Dendritic cell treated with granulocyte-macrophage colony-stimulating factor and Interleukin-4, amounts not matched to agents 40 ng/mL and 50 ng/mL, for 4 days (primary cell): ENCODE measurements at regions of chr19 and their contacts with region 1.

Region 1: GRCh38 chr19:52922841-52923777 is at the start of gene ZNF888:
- H3K4me3 Mint-ChIP-seq: peak within 1 kb of the TSS; percentile 81
- H3K27ac Mint-ChIP-seq: peak within 1 kb of the TSS; percentile 94
- H3K4me1 Mint-ChIP-seq: peaks cover 42% of the 10 kb centered on the region
- H3K27me3 Mint-ChIP-seq: no peaks in the 10 kb centered on the region

Region 2: GRCh38 chr19:52897144-52897935 is 25.8 kb before region 1 on chr19 and contains the start of gene ZNF320:
- intact Hi-C with region 1: loop called (anchors 1 kb)
- H3K4me3 Mint-ChIP-seq: peak within 1 kb of the TSS; percentile 97
- H3K27ac Mint-ChIP-seq: peak within 1 kb of the TSS; percentile 97
- H3K4me1 Mint-ChIP-seq: peaks cover 24% of the 10 kb centered on the region
- H3K27me3 Mint-ChIP-seq: no peaks in the 10 kb centered on the region

Region 3: DNA sequence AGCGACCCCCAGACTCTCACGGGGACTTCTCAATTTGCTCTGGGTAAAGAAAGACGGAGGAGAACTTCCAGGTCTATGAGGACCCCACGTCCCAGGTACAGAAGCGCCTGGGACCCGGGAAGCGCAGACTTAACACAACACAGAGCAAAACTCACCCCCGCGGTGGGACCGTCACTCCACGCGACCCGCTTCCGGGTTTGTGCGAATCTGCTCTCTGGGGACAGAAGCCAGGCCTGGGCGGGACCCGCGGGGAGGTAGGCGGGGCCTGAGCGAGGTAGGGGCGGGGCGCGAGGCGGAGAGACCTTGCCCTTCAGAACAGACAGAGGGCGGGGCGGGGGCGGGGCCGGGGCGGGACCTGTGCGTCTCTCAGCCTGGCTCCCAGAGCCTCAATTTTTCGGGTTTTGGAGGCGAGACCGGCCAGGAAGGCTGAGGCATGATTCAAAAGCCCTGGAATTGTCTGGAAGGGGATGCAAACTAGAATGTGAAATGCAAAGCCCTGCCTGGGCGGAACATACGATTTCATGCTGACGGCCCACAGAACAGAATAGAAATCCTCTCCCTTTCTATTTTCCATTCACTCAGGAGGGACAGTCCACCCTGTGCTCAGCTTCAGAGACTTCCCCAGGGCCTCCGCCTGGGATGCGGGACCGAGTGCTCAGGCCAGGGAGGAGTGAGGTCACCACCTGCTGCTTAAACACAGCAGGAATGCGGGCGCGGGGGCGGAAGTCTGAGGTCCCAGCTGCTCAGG is 19.5 kb after region 1 on chr19:
- intact Hi-C with region 1: loop called (anchors 2 kb)
- H3K4me3 Mint-ChIP-seq: peak overlapping the region; percentile 83
- H3K27ac Mint-ChIP-seq: peak overlapping the region; percentile 86
- H3K4me1 Mint-ChIP-seq: peaks cover 28% of the 10 kb centered on the region
- H3K27me3 Mint-ChIP-seq: peaks cover 13% of the 10 kb centered on the region

Region 4: DNA sequence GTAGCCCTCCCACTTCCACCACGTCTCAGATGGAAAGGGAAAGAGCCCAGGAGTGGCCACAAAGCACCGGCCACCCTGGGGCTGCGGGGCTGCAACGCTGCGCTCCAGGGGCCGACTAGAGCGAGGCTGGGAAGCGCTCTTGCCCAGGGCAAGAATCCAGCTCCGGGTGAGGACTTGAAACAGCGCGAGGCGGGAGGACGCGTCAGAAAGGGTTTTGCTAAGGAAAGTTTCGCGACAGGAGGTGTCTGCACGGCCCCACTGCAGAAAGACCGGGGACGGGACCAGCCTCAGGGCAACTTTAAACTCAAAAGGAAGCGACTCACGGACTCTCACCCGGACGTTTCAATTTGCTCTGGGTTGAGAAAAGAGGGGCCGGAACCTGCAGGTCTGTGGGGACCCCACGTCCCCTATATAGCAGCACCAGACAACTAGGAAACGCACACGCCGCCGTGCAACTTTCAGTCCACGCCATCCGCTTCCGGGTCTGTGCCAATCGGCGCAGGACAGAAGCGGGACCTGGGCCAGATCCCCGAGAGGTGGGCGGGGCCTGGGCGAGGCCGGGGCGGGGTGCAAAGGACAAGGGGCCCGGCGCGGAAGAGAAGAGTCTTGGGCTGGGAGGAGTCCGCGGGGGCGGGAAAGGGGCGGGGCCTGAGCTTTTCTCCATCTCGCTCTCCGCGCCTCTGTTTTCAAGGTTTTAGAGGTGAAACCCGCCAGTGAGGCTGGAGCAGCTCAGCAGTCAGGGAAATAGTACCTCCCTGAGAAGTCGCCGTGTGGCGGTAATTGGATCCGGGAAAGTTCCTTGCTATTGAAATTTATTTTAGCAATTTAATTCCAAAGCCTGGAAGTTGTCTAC is 39.5 kb after region 1 on chr19 and contains the start of gene ZNF816:
- intact Hi-C with region 1: loop called (anchors 5 kb)
- H3K4me3 Mint-ChIP-seq: peak within 1 kb of the TSS; percentile 99
- H3K27ac Mint-ChIP-seq: peak within 1 kb of the TSS; percentile 91
- H3K4me1 Mint-ChIP-seq: peaks cover 20% of the 10 kb centered on the region
- H3K27me3 Mint-ChIP-seq: no peaks in the 10 kb centered on the region

Region 5: DNA sequence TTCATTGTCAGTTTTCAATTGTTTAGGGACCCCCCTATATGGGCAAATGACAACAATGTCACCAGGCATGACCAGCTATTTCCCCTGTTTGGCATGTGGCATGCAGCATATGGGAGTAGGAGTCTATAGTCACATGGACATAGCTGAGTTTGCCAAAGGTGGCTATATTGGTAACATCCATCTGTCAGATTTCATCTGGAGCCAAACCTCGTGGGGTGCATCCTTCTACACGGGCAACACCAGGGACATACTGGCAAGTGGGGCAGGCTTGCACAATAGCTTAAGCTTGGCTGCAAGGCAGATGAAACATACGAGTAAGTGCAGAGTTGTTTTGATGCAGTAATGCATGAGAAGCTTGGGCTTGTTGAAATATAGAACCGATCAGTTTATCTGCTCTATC is 64.1 kb after region 1 on chr19:
- intact Hi-C with region 1: no loop called
- H3K4me3 Mint-ChIP-seq: no peak overlapping the region
- H3K27ac Mint-ChIP-seq: no peak overlapping the region
- H3K4me1 Mint-ChIP-seq: peaks cover 6% of the 10 kb centered on the region
- H3K27me3 Mint-ChIP-seq: peaks cover 6% of the 10 kb centered on the region

Region 6: DNA sequence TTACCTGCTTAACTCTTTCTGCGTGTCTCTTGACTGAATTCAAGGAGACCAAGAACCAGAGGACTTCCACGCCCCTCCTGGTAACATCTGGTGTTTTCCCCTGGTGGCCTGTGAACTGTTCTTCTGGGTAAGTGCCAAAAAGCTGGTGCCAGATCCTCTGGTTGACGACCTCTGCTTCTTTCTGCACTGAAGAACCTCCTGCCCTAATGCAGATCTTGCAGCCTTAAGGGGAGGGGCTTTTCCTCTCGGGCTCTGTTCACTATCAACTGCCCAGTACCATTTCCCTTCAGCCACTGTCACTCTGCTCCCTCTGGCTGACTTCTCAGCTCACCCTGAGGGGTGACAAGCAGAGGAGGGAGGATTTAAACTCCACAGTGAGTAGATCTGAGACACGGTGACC is 84.5 kb after region 1 on chr19:
- intact Hi-C with region 1: no loop called
- H3K4me3 Mint-ChIP-seq: no peak overlapping the region
- H3K27ac Mint-ChIP-seq: no peak overlapping the region
- H3K4me1 Mint-ChIP-seq: no peaks in the 10 kb centered on the region
- H3K27me3 Mint-ChIP-seq: no peaks in the 10 kb centered on the region